CD8-positive, alpha-beta T cell (primary cell): ENCODE measurements at regions of chr12 and their contacts with region 1.

Region 1: DNA sequence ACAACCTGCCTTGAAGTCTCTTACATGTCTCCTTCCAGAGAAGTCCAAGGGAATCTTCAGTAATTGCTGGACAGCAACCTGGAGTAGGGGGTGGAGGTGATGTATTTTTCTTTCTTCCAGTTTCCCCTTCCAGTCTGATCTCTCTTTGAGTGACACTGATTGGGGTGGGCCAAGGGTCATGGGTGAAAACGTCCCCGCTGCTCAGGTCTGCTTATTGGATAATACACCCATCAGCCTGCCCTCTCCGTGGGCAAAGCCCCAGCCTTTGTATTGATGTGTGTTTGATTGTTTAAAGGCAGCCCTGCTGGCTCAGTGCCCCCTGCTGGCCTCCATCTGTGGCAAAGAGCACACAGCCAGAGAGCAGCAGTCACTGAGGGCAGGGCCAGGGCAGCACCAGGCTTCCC is 35.7 kb upstream of the ATP2A2 start:
- DNase-seq: peak; percentile 6 to 59 (median 49)
- ATAC-seq: peak; percentile 52
- H3K4me3 ChIP-seq: no peak overlapping the region
- H3K4me3 Mint-ChIP-seq: no peak overlapping the region
- H3K27ac ChIP-seq: no peak overlapping the region
- H3K27ac Mint-ChIP-seq: no peak overlapping the region
- H3K4me1 ChIP-seq: no peaks in the 10 kb centered on the region
- H3K4me1 Mint-ChIP-seq: no peaks in the 10 kb centered on the region
- H3K27me3 ChIP-seq: no peaks in the 10 kb centered on the region
- H3K27me3 Mint-ChIP-seq: peaks cover 10% of the 10 kb centered on the region
- CTCF ChIP-seq: no peak

Region 2: GRCh38 chr12:110100315-110100970 is 144.9 kb before region 1 on chr12:
- CTCF ChIA-PET with region 1: interaction called, 8 read pairs
- POLR2A ChIA-PET with region 1: no interaction called
- intact Hi-C with region 1: loop called in 1 of 2 experiments (anchors 1 kb)
- DNase-seq: peak; percentile 15 to 82 (median 66)
- ATAC-seq: peak; percentile 85
- H3K4me3 ChIP-seq: no peak overlapping the region
- H3K4me3 Mint-ChIP-seq: no peak overlapping the region
- H3K27ac ChIP-seq: peak overlapping the region in 1 of 2 experiments; percentile 21
- H3K27ac Mint-ChIP-seq: peak overlapping the region; percentile 24
- H3K4me1 ChIP-seq: peaks cover 4% of the 10 kb centered on the region
- H3K4me1 Mint-ChIP-seq: peaks cover 7% of the 10 kb centered on the region
- H3K27me3 ChIP-seq: no peaks in the 10 kb centered on the region
- H3K27me3 Mint-ChIP-seq: no peaks in the 10 kb centered on the region
- CTCF ChIP-seq: peak; percentile 99

Region 3: DNA sequence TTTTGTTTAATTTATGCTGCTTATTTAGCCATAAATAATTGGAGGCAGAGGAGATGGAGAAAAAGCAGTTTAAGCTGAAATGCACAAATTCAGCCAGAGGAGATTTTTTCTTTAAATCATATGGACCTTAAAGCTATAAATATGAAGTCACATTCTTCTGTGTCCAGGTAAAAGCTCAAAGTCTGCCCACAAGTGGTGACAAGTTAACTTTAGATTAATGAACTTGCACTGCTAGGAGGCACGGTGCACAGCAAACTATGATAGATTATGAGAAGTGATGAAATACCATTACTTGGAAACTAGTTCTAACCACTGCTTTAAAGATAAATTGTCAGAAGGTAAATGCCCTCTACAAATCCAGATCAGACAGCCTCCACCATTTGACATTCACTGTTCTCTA is 52.2 kb before region 1 on chr12:
- CTCF ChIA-PET with region 1: no interaction called
- POLR2A ChIA-PET with region 1: no interaction called
- intact Hi-C with region 1: no loop called
- DNase-seq: no peak
- ATAC-seq: no peak
- H3K4me3 ChIP-seq: no peak overlapping the region
- H3K4me3 Mint-ChIP-seq: no peak overlapping the region
- H3K27ac ChIP-seq: no peak overlapping the region
- H3K27ac Mint-ChIP-seq: no peak overlapping the region
- H3K4me1 ChIP-seq: no peaks in the 10 kb centered on the region
- H3K4me1 Mint-ChIP-seq: no peaks in the 10 kb centered on the region
- H3K27me3 ChIP-seq: no peaks in the 10 kb centered on the region
- H3K27me3 Mint-ChIP-seq: no peaks in the 10 kb centered on the region
- CTCF ChIP-seq: no peak

Region 4: GRCh38 chr12:110203546-110203945 is 41.8 kb before region 1 on chr12:
- CTCF ChIA-PET with region 1: no interaction called
- POLR2A ChIA-PET with region 1: no interaction called
- intact Hi-C with region 1: no loop called
- DNase-seq: no peak
- ATAC-seq: no peak
- H3K4me3 ChIP-seq: no peak overlapping the region
- H3K4me3 Mint-ChIP-seq: no peak overlapping the region
- H3K27ac ChIP-seq: no peak overlapping the region
- H3K27ac Mint-ChIP-seq: no peak overlapping the region
- H3K4me1 ChIP-seq: no peaks in the 10 kb centered on the region
- H3K4me1 Mint-ChIP-seq: peaks cover 5% of the 10 kb centered on the region
- H3K27me3 ChIP-seq: no peaks in the 10 kb centered on the region
- H3K27me3 Mint-ChIP-seq: no peaks in the 10 kb centered on the region
- CTCF ChIP-seq: no peak